Activated T-helper 2 cell treated with anti-CD3 and anti-CD28 coated beads, Interferon-gamma antibody, Interleukin-2, Interleukin-4, amounts not matched to agents 10 μg/mL and 5 μg/mL and 100 μg/mL, durations not matched to agents 14 hours and 24 hours and 36 hours (primary cell): ENCODE measurements at regions of chr9 and their contacts with region 1.

Region 1: GRCh38 chr9:99057665-99058625 is 47.0 kb upstream of the TGFBR1 start:
- DNase-seq: peak; percentile 76
- H3K4me3 Mint-ChIP-seq: peak overlapping the region; percentile 73
- H3K27ac Mint-ChIP-seq: peak overlapping the region; percentile 81
- H3K4me1 Mint-ChIP-seq: peaks cover 59% of the 10 kb centered on the region
- H3K27me3 Mint-ChIP-seq: peaks cover 3% of the 10 kb centered on the region

Region 2: DNA sequence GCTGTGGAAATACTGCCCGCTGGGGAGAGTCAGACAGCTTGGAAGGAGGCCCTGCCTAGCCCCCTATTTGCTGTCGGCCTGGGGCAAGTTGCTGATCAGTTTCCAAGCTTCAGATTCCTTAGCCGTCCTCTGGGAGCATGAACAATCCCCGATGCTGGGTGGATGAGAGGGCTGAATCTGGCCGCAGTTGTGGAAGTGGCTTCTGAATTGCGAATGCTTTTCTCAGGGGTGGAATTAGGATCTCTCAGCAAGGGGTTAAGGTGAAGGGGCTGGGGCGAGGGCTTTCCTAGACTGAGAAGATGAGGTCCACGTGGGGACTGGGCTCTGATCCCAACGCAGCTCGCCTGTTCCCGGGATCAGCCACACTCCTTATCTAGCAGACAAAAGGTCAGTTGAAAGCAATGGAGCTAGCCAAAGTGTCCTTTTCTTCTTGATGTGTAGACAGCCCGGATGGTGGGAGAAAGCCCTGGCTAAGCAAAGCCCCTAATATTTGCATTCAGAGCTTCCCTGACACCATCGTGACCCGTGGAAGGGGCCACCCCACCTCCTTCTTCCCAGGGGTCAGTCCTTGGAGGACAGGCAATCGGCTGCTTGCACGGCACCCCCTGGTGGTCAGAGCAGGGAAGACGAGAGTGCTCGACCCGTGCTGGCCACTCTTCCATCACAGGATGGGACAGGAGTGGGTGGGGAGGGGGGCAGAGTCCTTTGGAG is 59.3 kb before region 1 on chr9:
- intact Hi-C with region 1: loop called (anchors 5 kb)
- DNase-seq: peak; percentile 39
- H3K4me3 Mint-ChIP-seq: no peak overlapping the region
- H3K27ac Mint-ChIP-seq: no peak overlapping the region
- H3K4me1 Mint-ChIP-seq: peaks cover 15% of the 10 kb centered on the region
- H3K27me3 Mint-ChIP-seq: peaks cover 16% of the 10 kb centered on the region

Region 3: DNA sequence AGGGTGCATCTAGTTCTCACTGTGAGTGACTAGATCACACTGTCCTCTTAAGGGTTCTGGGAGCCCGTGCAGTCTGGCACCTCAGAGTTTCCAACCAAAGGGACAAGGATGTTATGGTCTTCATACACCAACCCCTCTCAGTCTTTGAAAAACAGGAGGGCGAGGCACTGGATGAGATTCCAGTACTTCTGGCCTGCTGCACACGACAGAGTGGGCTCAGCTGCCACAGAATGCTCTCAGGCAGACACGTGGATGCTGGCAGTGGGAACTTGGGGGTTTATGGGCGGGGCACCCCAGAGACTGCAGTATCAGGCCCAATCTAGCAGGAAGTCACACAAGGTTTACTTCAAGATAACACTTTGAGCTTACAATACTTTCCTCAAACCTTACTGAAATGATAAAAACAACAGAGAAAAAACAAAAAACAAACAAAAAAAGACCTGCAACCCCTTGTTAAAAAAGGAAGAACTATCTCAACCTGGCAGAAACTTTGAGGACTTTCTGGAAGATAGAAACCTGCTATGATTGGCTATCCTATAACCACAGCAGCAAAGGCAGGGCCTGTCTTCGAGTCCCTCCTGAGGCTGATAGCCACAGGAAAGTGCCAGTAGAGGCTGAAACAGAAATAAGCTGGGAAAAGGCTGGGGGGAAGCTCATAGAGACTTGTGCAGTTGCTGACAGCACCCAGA is 18.7 kb after region 1 on chr9:
- intact Hi-C with region 1: loop called (anchors 2 kb)
- DNase-seq: peak; percentile 57
- H3K4me3 Mint-ChIP-seq: no peak overlapping the region
- H3K27ac Mint-ChIP-seq: peak overlapping the region; percentile 81
- H3K4me1 Mint-ChIP-seq: peaks cover 39% of the 10 kb centered on the region
- H3K27me3 Mint-ChIP-seq: peaks cover 9% of the 10 kb centered on the region

Region 4: GRCh38 chr9:99092643-99093491 is 34.9 kb after region 1 on chr9:
- intact Hi-C with region 1: loop called (anchors 2 kb)
- DNase-seq: peak; percentile 30
- H3K4me3 Mint-ChIP-seq: peak overlapping the region; percentile 19
- H3K27ac Mint-ChIP-seq: peak overlapping the region; percentile 88
- H3K4me1 Mint-ChIP-seq: peaks cover 48% of the 10 kb centered on the region
- H3K27me3 Mint-ChIP-seq: peaks cover 2% of the 10 kb centered on the region

Region 5: GRCh38 chr9:99104459-99105151 is 46.7 kb after region 1 on chr9 and contains the start of gene TGFBR1:
- intact Hi-C with region 1: loop called (anchors 2 kb)
- DNase-seq: peak; percentile 96
- H3K4me3 Mint-ChIP-seq: peak within 1 kb of the TSS; percentile 90
- H3K27ac Mint-ChIP-seq: peak within 1 kb of the TSS; percentile 88
- H3K4me1 Mint-ChIP-seq: peaks cover 50% of the 10 kb centered on the region
- H3K27me3 Mint-ChIP-seq: no peaks in the 10 kb centered on the region
- total RNA-seq, gene TGFBR1: 30.6 and 30.8 TPM in 2 replicates

Region 6: DNA sequence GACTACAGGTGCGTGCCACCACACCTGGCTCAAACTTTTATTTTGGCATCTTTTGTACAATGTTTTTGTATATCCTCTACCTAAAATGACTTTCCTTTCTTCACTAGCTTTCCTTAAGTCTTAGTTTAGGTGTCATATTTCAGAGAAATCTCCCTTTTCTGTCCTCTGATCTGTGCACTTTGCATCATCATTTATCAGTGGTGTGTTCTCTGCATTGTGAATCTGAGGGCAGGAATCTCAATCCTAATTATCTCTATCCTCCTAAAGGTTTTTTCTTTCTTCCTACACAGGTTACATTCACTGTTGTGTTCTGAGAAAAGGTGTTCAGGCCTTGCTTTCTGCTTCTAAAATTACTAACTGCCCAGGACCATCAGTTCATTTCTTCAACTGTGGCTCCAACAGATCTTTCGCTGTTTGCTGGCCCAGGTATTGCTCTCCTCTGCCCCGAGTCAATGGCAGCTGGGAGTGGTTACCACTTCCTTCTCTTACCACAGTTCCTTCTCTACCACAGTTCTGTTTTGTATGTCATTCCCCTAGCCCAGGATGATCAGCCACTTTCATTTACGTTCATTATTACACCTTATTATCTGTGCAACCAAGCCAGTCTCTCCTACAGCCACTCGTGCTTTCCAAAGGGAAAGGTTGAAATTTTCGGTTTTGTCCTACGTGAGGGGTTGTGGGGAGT is 61.0 kb after region 1 on chr9:
- intact Hi-C with region 1: loop called (anchors 1 kb)
- DNase-seq: peak; percentile 49
- H3K4me3 Mint-ChIP-seq: peak overlapping the region; percentile 66
- H3K27ac Mint-ChIP-seq: peak overlapping the region; percentile 77
- H3K4me1 Mint-ChIP-seq: peaks cover 59% of the 10 kb centered on the region
- H3K27me3 Mint-ChIP-seq: no peaks in the 10 kb centered on the region

Region 7: GRCh38 chr9:99150451-99151171 is 92.7 kb after region 1 on chr9:
- intact Hi-C with region 1: loop called (anchors 1 kb)
- DNase-seq: no peak
- H3K4me3 Mint-ChIP-seq: no peak overlapping the region
- H3K27ac Mint-ChIP-seq: no peak overlapping the region
- H3K4me1 Mint-ChIP-seq: peaks cover 27% of the 10 kb centered on the region
- H3K27me3 Mint-ChIP-seq: peaks cover 6% of the 10 kb centered on the region

Region 8: GRCh38 chr9:99389087-99390005 is 331.4 kb after region 1 on chr9:
- intact Hi-C with region 1: no loop called
- DNase-seq: no peak
- H3K4me3 Mint-ChIP-seq: no peak overlapping the region
- H3K27ac Mint-ChIP-seq: no peak overlapping the region
- H3K4me1 Mint-ChIP-seq: no peaks in the 10 kb centered on the region
- H3K27me3 Mint-ChIP-seq: peaks cover 5% of the 10 kb centered on the region